HEK293 (cell line): ENCODE measurements at regions of chr18 and their contacts with region 1.

Region 1: GRCh38 chr18:62249478-62250097 is 62.5 kb downstream of the RELCH start:
- H3K4me3 ChIP-seq: no peak overlapping the region
- H3K27ac ChIP-seq: no peak overlapping the region
- H3K4me1 ChIP-seq: no peaks in the 10 kb centered on the region
- CTCF ChIP-seq: no peak; the same call in 1 of the 2 replicates

Region 2: GRCh38 chr18:62186774-62187542 is 62.6 kb before region 1 on chr18 and contains the starts of genes PIGN and RELCH:
- CTCF ChIA-PET with region 1: interaction called, 125 read pairs
- POLR2A ChIA-PET with region 1: interaction called, 4 read pairs
- H3K4me3 ChIP-seq: peak within 1 kb of the TSS; percentile 100
- H3K27ac ChIP-seq: peak within 1 kb of the TSS; percentile 91
- H3K4me1 ChIP-seq: peaks cover 10% of the 10 kb centered on the region
- CTCF ChIP-seq: no peak; the same call in 1 of the 2 replicates

Region 3: DNA sequence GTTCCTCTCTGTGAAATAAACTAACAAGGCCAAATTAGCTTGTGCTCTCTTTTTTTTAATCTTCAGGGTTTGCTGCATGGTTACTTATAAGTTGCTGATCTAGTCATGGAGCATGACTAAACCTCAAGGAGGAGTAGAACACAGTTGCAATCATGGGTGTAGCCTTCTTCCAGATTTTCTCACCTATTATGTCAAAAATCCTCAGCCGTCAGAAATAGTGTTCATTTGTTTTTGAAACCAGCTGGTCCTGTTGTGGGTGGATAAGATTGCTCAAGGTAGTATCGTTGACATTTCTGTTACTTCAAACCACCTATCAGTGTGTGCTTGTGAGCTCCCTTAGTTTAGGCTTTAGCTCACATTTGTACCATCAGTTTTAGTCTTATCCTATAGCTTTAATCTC is 51.3 kb before region 1 on chr18:
- CTCF ChIA-PET with region 1: interaction called, 19 read pairs
- POLR2A ChIA-PET with region 1: no interaction called
- H3K4me3 ChIP-seq: no peak overlapping the region
- H3K27ac ChIP-seq: no peak overlapping the region
- H3K4me1 ChIP-seq: peaks cover 10% of the 10 kb centered on the region
- CTCF ChIP-seq: no peak

Region 4: DNA sequence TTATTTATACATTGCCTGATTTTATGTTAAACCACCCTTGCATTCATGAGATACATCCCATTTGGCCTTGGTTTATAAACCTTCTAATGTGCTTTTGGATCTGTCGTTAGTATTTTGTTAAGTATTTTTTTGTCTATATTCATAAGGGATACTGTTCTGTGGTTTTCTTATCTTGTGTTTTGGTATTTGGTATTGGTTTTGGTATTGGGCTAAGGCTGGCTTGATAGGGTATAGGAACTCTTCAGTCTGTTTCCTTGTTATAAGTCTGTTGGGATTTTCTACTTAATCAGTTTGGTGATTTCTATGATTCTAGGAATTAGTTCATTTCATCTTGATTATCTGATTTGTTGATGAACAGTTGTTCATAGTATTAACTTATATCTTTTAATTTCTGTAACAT is 13.3 kb before region 1 on chr18:
- CTCF ChIA-PET with region 1: interaction called, 15 read pairs
- POLR2A ChIA-PET with region 1: no interaction called
- H3K4me3 ChIP-seq: no peak overlapping the region
- H3K27ac ChIP-seq: no peak overlapping the region
- H3K4me1 ChIP-seq: no peaks in the 10 kb centered on the region
- CTCF ChIP-seq: no peak